H1 (cell line): ENCODE measurements at regions of chr12 and their contacts with region 1.

Region 1: DNA sequence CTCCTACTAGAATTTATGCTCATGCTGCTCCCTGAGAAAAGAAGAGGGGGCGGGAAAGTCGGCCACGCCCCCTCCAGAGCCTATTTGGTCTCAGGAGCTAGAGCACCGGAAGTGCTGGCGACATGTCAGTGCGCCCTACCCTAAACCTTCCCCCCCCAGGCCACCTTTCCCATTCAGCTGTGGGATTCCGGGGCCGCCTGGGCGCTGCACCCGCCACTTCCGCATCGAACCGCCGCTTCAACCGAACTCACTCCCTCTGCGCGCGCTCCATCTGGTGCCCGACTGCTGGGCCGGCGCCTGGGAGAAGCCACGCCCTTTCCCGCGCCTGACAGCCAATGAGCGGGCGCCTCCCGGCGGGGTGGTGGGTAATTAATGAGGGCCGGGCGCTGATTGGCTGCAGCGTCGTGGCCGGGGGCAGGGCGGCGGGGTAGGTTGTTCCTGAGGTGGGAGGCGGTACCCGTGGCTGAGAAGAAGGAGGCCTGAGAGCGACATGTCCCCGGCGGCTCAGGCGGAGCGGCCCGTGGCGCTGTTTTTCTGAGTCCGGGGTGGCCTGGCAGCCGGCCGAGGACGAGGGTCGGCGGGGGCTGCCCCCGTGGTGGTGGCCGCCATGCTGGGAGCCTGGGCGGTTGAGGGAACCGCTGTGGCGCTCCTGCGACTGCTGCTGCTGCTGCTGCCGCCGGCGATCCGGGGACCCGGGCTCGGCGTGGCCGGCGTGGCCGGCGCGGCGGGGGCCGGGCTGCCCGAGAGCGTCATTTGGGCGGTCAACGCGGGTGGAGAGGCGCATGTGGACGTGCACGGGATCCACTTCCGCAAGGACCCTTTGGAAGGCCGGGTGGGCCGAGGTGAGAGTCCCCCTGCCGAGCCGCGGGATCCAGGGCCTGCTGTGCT is at the start of gene MLEC:
- DNase-seq: peak; percentile 77 to 98
- H3K4me3 ChIP-seq: peak within 1 kb of the TSS; percentile 74 to 93 (median 90)
- H3K27ac ChIP-seq: peak within 1 kb of the TSS; percentile 87
- H3K4me1 ChIP-seq: peaks cover 2 to 15% (median 4%) of the 10 kb centered on the region in 4 experiments; a peak in 5 of 7 replicates
- H3K27me3 ChIP-seq: no peaks in the 10 kb centered on the region
- CTCF ChIP-seq: peak in 2 of 3 experiments; percentile 23; a peak in 2 of 4 replicates
- EP300 ChIP-seq: no peak
- POLR2A ChIP-seq: peak; percentile 11 to 55; a peak in 1 of 3 replicates
- RAD21 ChIP-seq: peak; percentile 45 to 55; a peak in 3 of 4 replicates
- total RNA-seq, gene MLEC: 260 and 266 TPM in 2 replicates

Region 2: GRCh38 chr12:120669055-120669840 is 17.7 kb before region 1 on chr12:
- CTCF ChIA-PET with region 1: interaction called, 5 read pairs
- POLR2A ChIA-PET with region 1: interaction called, 15 read pairs
- DNase-seq: peak in 1 of 2 experiments; percentile 66
- H3K4me3 ChIP-seq: peak overlapping the region in 3 of 4 experiments; percentile 1 to 33 (median 14); a peak in 3 of 8 replicates
- H3K27ac ChIP-seq: no peak overlapping the region
- H3K4me1 ChIP-seq: peaks cover 7 to 19% (median 12%) of the 10 kb centered on the region in 4 experiments
- H3K27me3 ChIP-seq: no peaks in the 10 kb centered on the region
- CTCF ChIP-seq: peak in 1 of 3 experiments; percentile 1; a peak in 1 of 4 replicates
- EP300 ChIP-seq: no peak
- POLR2A ChIP-seq: no peak
- RAD21 ChIP-seq: no peak

Region 3: DNA sequence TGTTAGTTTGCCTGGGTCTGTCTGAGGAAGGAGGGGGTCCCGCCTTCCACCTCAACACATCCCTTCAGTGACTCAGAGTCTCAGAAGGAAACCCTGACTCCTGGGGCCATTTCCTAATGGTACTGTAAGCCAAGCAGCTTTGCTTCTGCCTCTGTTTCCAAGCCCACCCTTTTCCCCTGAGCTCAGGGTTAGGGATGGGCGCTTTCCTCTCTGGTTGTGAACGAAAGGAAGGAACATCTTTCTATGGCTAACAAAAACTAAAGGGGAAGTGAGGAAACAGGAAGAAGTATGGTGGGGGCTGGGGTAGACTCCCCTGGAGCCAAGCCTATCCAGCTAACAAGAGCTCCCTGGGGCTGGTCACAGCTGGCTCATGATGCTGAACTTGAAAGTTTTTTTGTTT is 11.7 kb after region 1 on chr12:
- CTCF ChIA-PET with region 1: interaction called, 10 read pairs
- POLR2A ChIA-PET with region 1: interaction called, 28 read pairs
- DNase-seq: no peak
- H3K4me3 ChIP-seq: no peak overlapping the region
- H3K27ac ChIP-seq: no peak overlapping the region
- H3K4me1 ChIP-seq: peaks cover 0 to 7% (median 4%) of the 10 kb centered on the region in 4 experiments; a peak in 5 of 7 replicates
- H3K27me3 ChIP-seq: no peaks in the 10 kb centered on the region
- CTCF ChIP-seq: no peak
- EP300 ChIP-seq: no peak
- POLR2A ChIP-seq: no peak
- RAD21 ChIP-seq: no peak

Region 4: GRCh38 chr12:120710031-120710804 is 23.3 kb after region 1 on chr12 and contains the start of gene UNC119B:
- CTCF ChIA-PET with region 1: interaction called, 3 read pairs
- POLR2A ChIA-PET with region 1: interaction called, 10 read pairs
- DNase-seq: peak in 1 of 2 experiments; percentile 82
- H3K4me3 ChIP-seq: peak within 1 kb of the TSS; percentile 72 to 95 (median 87)
- H3K27ac ChIP-seq: peak within 1 kb of the TSS; percentile 82
- H3K4me1 ChIP-seq: peaks cover 5 to 13% (median 9%) of the 10 kb centered on the region in 4 experiments; a peak in 6 of 7 replicates
- H3K27me3 ChIP-seq: no peaks in the 10 kb centered on the region
- CTCF ChIP-seq: no peak
- EP300 ChIP-seq: no peak
- POLR2A ChIP-seq: peak in 1 of 2 experiments; percentile 66; a peak in 1 of 3 replicates
- RAD21 ChIP-seq: no peak
- total RNA-seq, gene UNC119B: 50.1 and 51.9 TPM in 2 replicates

Region 5: GRCh38 chr12:120748242-120748641 is 61.3 kb after region 1 on chr12:
- CTCF ChIA-PET with region 1: no interaction called
- POLR2A ChIA-PET with region 1: no interaction called
- DNase-seq: no peak
- H3K4me3 ChIP-seq: no peak overlapping the region
- H3K27ac ChIP-seq: no peak overlapping the region
- H3K4me1 ChIP-seq: no peaks in the 10 kb centered on the region
- H3K27me3 ChIP-seq: no peaks in the 10 kb centered on the region
- CTCF ChIP-seq: no peak
- EP300 ChIP-seq: no peak
- POLR2A ChIP-seq: no peak
- RAD21 ChIP-seq: no peak